PC-9 (cell line): ENCODE measurements at regions of chr11 and their contacts with region 1.

Region 1: DNA sequence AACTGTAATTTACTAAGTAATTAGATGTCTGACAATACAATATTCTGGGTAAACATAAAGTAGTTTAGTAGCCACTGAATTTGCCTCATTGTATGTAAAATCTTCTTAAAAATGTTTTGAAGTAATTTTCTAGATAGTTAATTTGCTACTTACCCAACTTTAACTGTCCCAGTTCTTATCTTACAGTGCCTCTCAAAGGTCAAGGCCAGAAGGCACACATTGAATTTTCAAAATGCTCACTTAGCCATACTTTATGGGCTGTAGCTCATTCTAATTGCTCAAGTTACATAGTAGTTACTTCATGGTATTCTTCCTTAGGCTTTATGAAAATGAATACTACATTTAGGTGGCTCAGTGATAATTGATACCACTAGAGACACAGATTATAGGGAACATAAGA is 666.6 kb downstream of the CNTN5 start:
- DNase-seq: no peak
- H3K4me3 ChIP-seq: no peak overlapping the region
- H3K27ac ChIP-seq: no peak overlapping the region
- H3K4me1 ChIP-seq: no peaks in the 10 kb centered on the region
- H3K27me3 ChIP-seq: no peaks in the 10 kb centered on the region
- CTCF ChIP-seq: no peak

Region 2: GRCh38 chr11:99446400-99446799 is 240.9 kb before region 1 on chr11:
- CTCF ChIA-PET with region 1: no interaction called
- POLR2A ChIA-PET with region 1: interaction called, 37 read pairs
- intact Hi-C with region 1: no loop called
- DNase-seq: no peak
- H3K4me3 ChIP-seq: no peak overlapping the region
- H3K27ac ChIP-seq: no peak overlapping the region
- H3K4me1 ChIP-seq: no peaks in the 10 kb centered on the region
- H3K27me3 ChIP-seq: no peaks in the 10 kb centered on the region
- CTCF ChIP-seq: no peak

Region 3: DNA sequence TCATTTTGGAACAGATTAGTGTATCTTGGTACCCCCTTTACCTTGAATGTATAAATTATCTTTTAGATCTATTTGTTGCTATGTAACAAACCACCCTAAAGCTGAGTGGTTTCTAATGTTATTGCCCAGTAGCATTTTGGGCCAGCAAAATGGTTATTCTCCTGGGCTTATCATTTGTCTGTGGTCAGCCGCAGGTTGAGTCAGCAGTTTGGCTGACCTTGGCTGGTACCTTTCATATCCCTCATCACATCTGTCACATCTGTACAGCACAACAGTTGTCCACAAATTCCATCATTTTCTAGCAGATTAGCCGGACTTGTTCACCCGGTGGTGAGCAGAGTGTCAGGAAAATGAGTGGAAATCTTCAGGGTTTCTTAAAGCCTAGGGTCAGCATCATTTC is 411.2 kb after region 1 on chr11:
- CTCF ChIA-PET with region 1: no interaction called
- POLR2A ChIA-PET with region 1: no interaction called
- intact Hi-C with region 1: no loop called
- DNase-seq: no peak
- H3K4me3 ChIP-seq: no peak overlapping the region
- H3K27ac ChIP-seq: no peak overlapping the region
- H3K4me1 ChIP-seq: no peaks in the 10 kb centered on the region
- H3K27me3 ChIP-seq: no peaks in the 10 kb centered on the region
- CTCF ChIP-seq: no peak